Posterior vena cava (tissue), 2 donors: ENCODE measurements at regions of chr9 and their contacts with region 1.

Region 1: GRCh38 chr9:113993838-113994540 is 84.1 kb downstream of the AMBP start:
- DNase-seq: peak; percentile 93

Region 2: DNA sequence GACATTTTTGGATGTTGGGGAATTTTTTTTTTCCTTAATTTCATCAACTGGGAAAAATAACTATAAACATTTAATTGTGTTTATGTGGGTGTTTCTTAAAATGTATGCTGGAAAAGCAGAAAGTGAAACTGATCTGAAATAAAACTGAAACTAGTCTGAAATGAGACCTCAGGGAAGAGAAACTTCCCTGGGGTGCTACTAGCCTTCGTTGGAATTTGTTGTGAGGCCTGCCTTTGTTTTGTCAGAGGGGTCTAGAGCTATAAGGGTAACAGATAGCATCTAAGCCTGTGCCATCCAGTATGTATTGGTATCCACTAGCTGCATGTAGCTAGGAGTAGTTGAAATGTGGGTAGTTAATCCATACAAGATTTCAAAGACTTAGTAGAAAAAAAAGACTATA is 107.5 kb before region 1 on chr9:
- intact Hi-C with region 1: loop called in 1 of 2 experiments (anchors 10 kb)
- DNase-seq: no peak